K562 (cell line): ENCODE measurements at regions of chr7 and their contacts with region 1.

Region 1: DNA sequence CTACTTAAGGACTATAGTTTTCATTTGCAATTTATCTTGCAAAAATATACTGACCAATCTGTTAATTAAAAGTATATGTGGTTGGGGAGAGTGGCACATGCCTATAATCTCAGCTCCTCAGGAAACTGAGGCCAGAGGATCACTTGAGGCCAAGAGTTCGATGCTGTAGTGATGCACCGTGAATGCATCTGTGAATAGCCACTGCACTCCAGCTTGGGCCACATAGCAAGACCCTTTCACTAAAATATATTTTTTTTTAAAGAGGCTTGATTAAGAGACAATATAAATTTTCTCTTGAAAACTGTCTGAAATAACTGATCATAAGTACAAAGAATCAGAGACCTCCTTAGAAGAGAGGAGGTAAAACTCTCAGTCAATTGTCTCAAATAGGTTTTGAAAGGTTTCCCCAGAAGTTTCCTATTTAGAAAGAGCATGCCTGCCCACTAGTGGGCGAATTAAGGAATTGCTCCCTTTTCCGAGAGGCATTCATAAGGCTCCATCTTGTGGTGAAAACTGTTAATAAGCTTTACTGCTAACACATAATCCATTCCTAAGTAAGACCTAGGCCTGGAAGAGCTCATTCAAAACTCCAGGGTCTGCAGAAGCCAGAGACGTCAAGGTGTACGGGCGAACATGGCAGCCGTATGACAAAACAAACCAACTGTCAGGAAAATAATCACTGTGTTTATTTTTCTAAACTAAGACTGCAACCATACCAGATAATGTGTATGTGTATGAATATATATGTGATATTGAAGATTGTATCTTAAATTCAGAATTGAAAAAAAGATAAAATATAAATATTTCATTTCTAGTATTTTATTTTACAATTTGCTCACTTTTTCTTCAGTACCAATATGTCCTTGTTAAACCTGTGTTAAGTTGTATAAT is 6.8 kb upstream of the TAS2R40 start:
- DNase-seq: peak; percentile 86 to 92 (median 90)
- ATAC-seq: peak; percentile 97
- H3K4me3 ChIP-seq: no peak overlapping the region
- H3K27ac ChIP-seq: no peak overlapping the region
- H3K4me1 ChIP-seq: no peaks in the 10 kb centered on the region
- H3K27me3 ChIP-seq: peaks cover 6 to 19% of the 10 kb centered on the region in 2 experiments; a peak in 4 of 5 replicates
- CTCF ChIP-seq: peak; percentile 100
- EP300 ChIP-seq: no peak
- POLR2A ChIP-seq: no peak
- RAD21 ChIP-seq: peak; percentile 100

Region 2: DNA sequence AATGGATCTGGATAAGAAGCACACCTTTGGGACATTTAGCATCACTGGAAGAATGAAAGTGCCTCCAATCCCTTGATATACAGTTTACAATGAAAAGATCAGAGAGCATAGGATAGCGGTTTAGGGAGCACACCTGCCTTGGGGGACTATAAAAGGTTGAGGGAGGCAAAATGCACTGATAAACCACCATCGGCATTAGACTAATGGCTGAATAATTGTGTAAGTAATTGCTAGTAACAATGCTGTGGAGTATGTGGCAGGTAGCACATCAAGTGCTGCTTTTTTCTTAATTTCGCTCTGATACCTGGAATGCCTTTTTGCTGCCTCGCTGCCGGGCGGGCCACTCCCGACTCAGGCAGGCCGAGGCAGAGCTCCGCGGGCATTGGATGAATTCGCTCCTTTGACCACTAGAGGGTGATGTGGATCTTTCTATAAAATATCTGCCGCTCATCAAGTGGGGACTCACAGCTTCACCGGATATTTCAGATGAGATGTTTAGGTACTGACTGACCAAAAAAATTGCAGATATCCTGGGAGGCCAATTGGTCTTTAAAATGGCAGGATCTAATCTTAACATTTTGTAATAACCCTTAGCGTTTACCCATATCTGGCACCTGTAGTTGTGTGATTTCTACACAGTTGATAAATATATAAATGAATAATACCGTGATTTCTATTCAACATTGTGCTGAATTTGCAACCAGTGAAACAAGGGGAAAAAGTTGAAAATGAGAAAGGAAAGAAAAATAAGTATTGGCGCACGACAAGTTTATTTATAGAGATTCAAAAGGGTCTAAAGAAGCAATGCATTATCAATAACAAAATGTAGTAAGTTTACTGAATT is 582.5 kb before region 1 on chr7:
- CTCF ChIA-PET with region 1: interaction called, 3 read pairs
- POLR2A ChIA-PET with region 1: no interaction called
- in situ Hi-C with region 1: loop called (anchors 10 kb)
- intact Hi-C with region 1: loop called (anchors 10 kb)
- DNase-seq: peak; percentile 80 to 85 (median 84)
- ATAC-seq: peak; percentile 98
- H3K4me3 ChIP-seq: no peak overlapping the region
- H3K27ac ChIP-seq: no peak overlapping the region
- H3K4me1 ChIP-seq: no peaks in the 10 kb centered on the region
- H3K27me3 ChIP-seq: peaks cover 0 to 5% of the 10 kb centered on the region in 2 experiments; a peak in 3 of 5 replicates
- CTCF ChIP-seq: peak; percentile 89 to 90 (median 89)
- EP300 ChIP-seq: no peak
- POLR2A ChIP-seq: no peak
- RAD21 ChIP-seq: peak; percentile 81 to 83

Region 3: DNA sequence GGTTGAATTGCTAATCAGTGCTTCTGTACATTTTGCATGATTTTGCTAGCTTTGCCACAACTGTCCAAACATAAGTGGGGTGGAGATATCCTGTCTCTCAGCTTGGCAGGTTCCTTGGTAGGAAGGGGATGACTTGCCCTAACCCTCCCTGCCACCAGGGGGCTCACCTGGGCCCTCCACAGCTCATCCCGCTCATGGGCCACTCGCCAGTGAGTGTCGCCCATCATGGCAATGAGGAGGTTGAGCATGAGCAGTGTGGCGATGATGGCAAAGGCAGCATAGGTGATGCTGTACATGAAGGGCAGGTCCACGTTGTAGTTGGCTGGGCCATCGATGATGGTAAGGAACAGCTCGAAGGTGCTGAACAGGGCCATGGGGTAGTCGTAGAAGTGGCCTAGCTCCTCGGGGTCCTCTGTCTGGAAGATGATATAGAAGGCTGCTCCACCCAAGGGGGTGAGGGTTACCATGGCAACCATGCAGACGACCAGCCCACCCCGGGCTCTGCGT is 341.7 kb before region 1 on chr7:
- CTCF ChIA-PET with region 1: interaction called, 6 read pairs
- POLR2A ChIA-PET with region 1: no interaction called
- in situ Hi-C with region 1: loop called (anchors 5 kb)
- intact Hi-C with region 1: no loop called
- DNase-seq: peak; percentile 72 to 93 (median 88)
- ATAC-seq: peak; percentile 92
- H3K4me3 ChIP-seq: no peak overlapping the region
- H3K27ac ChIP-seq: no peak overlapping the region
- H3K4me1 ChIP-seq: peaks cover 0 to 10% of the 10 kb centered on the region in 2 experiments; a peak in 1 of 5 replicates
- H3K27me3 ChIP-seq: peaks cover 12 to 72% of the 10 kb centered on the region in 2 experiments
- CTCF ChIP-seq: peak; percentile 89 to 96 (median 94)
- EP300 ChIP-seq: no peak
- POLR2A ChIP-seq: no peak
- RAD21 ChIP-seq: peak; percentile 53 to 79

Region 4: DNA sequence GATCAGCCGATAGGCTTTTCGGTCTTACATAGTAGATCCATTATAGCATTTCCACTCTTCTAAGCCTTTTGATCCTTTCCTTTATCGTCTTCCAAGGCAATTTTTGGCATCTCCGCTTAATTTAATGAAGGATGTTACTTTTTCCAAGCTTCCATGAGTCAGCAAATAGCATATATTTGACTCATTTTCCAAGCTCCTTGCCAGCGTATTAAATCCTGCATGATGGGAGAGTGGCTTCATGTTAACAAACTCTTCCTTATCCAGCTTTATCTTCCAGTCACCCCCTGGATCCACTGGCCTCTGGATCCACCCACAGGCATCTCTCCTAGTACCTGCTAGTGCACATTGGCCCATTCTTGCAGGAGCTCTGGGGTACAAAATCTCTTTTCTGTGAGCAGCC is 201.1 kb before region 1 on chr7:
- CTCF ChIA-PET with region 1: interaction called, 222 read pairs
- POLR2A ChIA-PET with region 1: interaction called, 4 read pairs
- in situ Hi-C with region 1: loop called (anchors 5 kb)
- intact Hi-C with region 1: no loop called
- DNase-seq: no peak
- ATAC-seq: no peak
- H3K4me3 ChIP-seq: no peak overlapping the region
- H3K27ac ChIP-seq: no peak overlapping the region
- H3K4me1 ChIP-seq: no peaks in the 10 kb centered on the region
- H3K27me3 ChIP-seq: peaks cover 12 to 18% of the 10 kb centered on the region in 2 experiments; a peak in 3 of 5 replicates
- CTCF ChIP-seq: no peak
- EP300 ChIP-seq: no peak
- POLR2A ChIP-seq: no peak
- RAD21 ChIP-seq: no peak

Region 5: DNA sequence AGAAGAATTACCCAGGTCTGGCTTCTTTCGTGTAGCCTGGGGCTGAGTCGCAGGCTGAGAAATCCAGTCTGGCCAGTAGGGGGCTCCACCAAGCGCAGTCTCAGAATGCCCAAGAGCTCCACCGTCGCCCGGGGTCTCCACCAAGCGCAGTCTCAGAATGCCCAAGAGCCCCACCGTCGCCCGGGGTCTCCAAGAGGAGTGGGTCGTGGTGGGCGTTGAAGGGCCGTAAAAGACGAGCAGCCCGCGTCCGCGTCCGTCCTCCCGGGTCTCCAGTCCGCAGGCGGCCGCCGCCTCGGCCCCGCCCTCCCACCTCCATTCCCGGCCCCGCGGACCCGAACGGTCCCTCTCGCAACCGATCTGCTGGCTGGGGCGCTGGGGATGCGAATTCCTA is 165.2 kb after region 1 on chr7:
- CTCF ChIA-PET with region 1: no interaction called
- POLR2A ChIA-PET with region 1: no interaction called
- in situ Hi-C with region 1: no loop called
- intact Hi-C with region 1: no loop called
- DNase-seq: peak; percentile 81 to 94 (median 88)
- ATAC-seq: peak; percentile 80
- H3K4me3 ChIP-seq: peak overlapping the region; percentile 72
- H3K27ac ChIP-seq: peak overlapping the region; percentile 94
- H3K4me1 ChIP-seq: peaks cover 21 to 31% of the 10 kb centered on the region in 2 experiments; a peak in 4 of 5 replicates
- H3K27me3 ChIP-seq: peaks cover 0 to 7% of the 10 kb centered on the region in 2 experiments; a peak in 1 of 5 replicates
- CTCF ChIP-seq: peak; percentile 94 to 98 (median 95)
- EP300 ChIP-seq: no peak; the same call in 1 of the 2 replicates
- POLR2A ChIP-seq: peak; percentile 44; the same call in 1 of the 2 replicates
- RAD21 ChIP-seq: peak; percentile 47 to 49

Region 6: DNA sequence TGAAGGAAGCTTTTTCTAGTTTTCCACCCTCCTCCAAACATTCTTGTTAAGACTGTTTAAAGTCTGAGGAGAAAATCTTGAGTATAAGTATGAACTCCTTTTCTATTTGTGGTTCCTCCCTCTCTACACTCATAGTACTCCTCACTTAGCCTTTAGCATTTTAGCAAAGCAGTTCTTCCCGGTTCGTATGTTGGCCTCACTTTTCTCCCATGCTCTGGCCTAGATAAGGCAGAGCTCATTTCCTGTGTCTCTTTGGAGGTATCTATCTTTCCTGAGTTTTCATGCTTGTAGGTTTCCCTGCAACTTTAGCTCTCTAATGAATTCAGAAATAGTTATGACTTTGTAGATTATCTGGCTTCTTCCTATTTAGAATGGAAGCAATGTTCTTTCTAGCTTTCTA is 733.7 kb after region 1 on chr7:
- CTCF ChIA-PET with region 1: no interaction called
- POLR2A ChIA-PET with region 1: no interaction called
- in situ Hi-C with region 1: no loop called
- intact Hi-C with region 1: no loop called
- DNase-seq: no peak
- ATAC-seq: peak; percentile 52
- H3K4me3 ChIP-seq: no peak overlapping the region
- H3K27ac ChIP-seq: no peak overlapping the region
- H3K4me1 ChIP-seq: 0 out of 5 replicates have a peak, but pooled peaks cover 0 to 2% of the 10 kb centered on the region in 2 experiments
- H3K27me3 ChIP-seq: no peaks in the 10 kb centered on the region; a peak in 2 of 5 replicates
- CTCF ChIP-seq: no peak
- EP300 ChIP-seq: no peak
- POLR2A ChIP-seq: no peak
- RAD21 ChIP-seq: no peak